Transverse colon (tissue), 4 donors: ENCODE measurements at regions of chr2 and their contacts with region 1.

Region 1: GRCh38 chr2:79320871-79321270 is 161.3 kb upstream of the REG3A start:
- DNase-seq: no peak
- H3K4me3 ChIP-seq: no peak overlapping the region
- H3K27ac ChIP-seq: no peak overlapping the region
- H3K4me1 ChIP-seq: no peaks in the 10 kb centered on the region
- H3K27me3 ChIP-seq: no peaks in the 10 kb centered on the region
- CTCF ChIP-seq: no peak
- EP300 ChIP-seq: no peak
- POLR2A ChIP-seq: no peak

Region 2: DNA sequence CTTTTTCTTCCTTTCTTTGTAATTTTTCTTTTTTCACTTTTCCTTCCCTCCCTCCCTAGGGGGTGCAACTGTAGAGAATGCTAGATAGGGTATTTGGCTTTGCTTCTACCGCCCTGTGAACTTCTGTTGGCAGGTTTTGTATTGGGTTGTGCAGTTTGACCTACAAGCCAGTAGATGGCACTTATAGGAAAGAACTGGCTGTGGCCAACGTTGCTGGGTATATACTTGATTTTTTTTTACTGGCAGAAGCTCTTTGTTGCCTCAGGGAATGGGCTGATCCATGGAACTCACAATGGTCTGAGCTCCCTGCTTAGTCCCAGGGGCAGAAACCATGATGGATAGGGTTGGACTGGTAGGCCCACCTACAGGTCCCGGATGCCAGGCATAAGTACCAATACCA is 2003.2 kb after region 1 on chr2:
- in situ Hi-C with region 1: no loop called
- intact Hi-C with region 1: loop called (anchors 10 kb)
- DNase-seq: no peak
- H3K4me3 ChIP-seq: no peak overlapping the region
- H3K27ac ChIP-seq: no peak overlapping the region
- H3K4me1 ChIP-seq: no peaks in the 10 kb centered on the region
- H3K27me3 ChIP-seq: no peaks in the 10 kb centered on the region
- CTCF ChIP-seq: no peak
- EP300 ChIP-seq: no peak
- POLR2A ChIP-seq: no peak